CD4-positive, alpha-beta memory T cell (primary cell): ENCODE measurements at regions of chr1 and their contacts with region 1.

Region 1: DNA sequence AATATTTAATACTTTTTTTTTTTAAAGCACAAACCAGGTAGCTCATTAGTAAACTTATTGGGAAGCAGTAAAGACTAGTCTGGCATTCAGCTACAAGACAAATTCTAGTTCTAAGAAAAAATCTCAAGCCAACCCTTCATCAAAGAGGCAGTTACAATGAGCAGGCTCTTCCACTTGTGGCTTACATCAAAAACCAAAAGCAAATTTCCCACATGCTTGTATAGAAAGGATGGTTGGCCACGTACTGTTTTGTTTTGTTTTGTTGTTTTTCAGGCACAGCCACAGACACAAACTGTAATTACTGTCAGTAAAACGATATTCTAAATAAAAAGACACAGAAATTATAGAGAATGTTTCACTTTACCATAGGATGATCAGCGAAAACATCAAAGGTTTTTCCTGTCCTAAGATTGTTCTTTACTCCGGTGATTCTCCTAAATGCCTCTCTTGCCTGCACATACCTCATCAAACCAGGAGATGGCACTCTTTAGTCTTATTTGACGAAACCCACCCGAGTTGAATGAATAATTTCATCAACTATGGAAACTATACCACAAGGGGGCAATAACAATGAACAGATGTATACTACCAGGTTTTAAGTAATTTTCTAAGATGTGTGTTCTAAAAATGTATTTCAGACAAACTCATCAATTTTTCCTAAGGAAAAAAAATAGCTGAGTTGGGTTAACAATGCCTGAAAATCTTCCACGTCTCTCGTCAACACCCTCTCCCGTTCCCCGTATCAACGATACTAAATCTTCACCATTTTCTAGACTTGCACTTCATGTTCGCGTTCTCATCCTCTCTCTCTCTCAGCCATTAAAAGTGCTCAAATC is 26.9 kb downstream of the RPL5 start:
- DNase-seq: peak; percentile 70 to 84 (median 80)
- H3K4me3 ChIP-seq: no peak overlapping the region
- H3K4me3 Mint-ChIP-seq: peak overlapping the region; percentile 48 to 81 (median 71)
- H3K27ac ChIP-seq: peak overlapping the region; percentile 6
- H3K27ac Mint-ChIP-seq: peak overlapping the region; percentile 14 to 89 (median 68)
- H3K4me1 ChIP-seq: peaks cover 22% of the 10 kb centered on the region
- H3K4me1 Mint-ChIP-seq: peaks cover 14 to 17% (median 15%) of the 10 kb centered on the region in 4 donors
- H3K27me3 ChIP-seq: no peaks in the 10 kb centered on the region
- H3K27me3 Mint-ChIP-seq: no peaks in the 10 kb centered on the region

Region 2: GRCh38 chr1:92108631-92109030 is 750.2 kb before region 1 on chr1:
- CTCF ChIA-PET with region 1: no interaction called
- POLR2A ChIA-PET with region 1: no interaction called
- intact Hi-C with region 1: no loop called
- DNase-seq: no peak
- H3K4me3 ChIP-seq: no peak overlapping the region
- H3K4me3 Mint-ChIP-seq: no peak overlapping the region
- H3K27ac ChIP-seq: no peak overlapping the region
- H3K27ac Mint-ChIP-seq: no peak overlapping the region
- H3K4me1 ChIP-seq: no peaks in the 10 kb centered on the region
- H3K4me1 Mint-ChIP-seq: no peaks in the 10 kb centered on the region
- H3K27me3 ChIP-seq: no peaks in the 10 kb centered on the region
- H3K27me3 Mint-ChIP-seq: no peaks in the 10 kb centered on the region

Region 3: DNA sequence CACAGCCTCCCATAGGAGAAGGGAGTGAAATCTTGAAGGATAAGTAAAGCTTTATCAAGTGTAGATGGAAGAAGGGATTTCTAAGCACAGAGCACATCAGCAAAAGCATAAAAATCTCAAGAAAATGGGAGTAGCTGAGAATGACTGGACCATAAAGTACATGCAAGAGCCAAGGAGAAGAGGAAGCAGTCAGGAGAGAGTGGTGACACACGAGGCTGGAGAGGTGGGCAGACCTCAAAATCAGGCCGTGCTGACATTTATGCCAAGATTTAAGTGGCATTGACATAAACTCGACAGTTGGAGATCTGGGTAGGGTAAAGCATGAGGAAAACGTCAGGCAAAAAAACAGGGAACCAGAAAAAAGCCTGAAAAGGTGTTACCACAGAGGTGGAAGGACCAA is 434.4 kb before region 1 on chr1:
- CTCF ChIA-PET with region 1: no interaction called
- POLR2A ChIA-PET with region 1: no interaction called
- intact Hi-C with region 1: no loop called
- DNase-seq: no peak
- H3K4me3 ChIP-seq: no peak overlapping the region
- H3K4me3 Mint-ChIP-seq: no peak overlapping the region
- H3K27ac ChIP-seq: no peak overlapping the region
- H3K27ac Mint-ChIP-seq: no peak overlapping the region
- H3K4me1 ChIP-seq: no peaks in the 10 kb centered on the region
- H3K4me1 Mint-ChIP-seq: no peaks in the 10 kb centered on the region
- H3K27me3 ChIP-seq: no peaks in the 10 kb centered on the region
- H3K27me3 Mint-ChIP-seq: no peaks in the 10 kb centered on the region

Region 4: DNA sequence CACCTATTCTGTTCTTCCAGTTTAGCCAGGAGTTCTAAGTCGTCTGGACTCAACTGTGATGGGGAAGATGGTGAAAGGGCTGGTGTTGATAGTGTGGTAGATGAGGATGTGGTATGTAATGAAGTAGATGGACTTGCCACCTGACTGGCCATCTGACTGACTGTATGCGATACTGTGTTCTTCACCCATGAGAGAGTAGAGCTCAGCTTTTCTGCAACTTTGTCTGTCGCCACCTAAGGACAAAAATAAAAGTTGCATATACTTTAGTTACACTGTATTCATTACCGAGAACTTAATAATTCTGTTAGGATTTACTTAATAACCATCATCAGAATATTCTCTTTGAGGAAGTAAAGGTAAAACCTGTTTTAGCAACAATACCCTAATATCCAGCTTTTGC is 122.4 kb before region 1 on chr1:
- CTCF ChIA-PET with region 1: no interaction called
- POLR2A ChIA-PET with region 1: no interaction called
- intact Hi-C with region 1: no loop called
- DNase-seq: no peak
- H3K4me3 ChIP-seq: no peak overlapping the region
- H3K4me3 Mint-ChIP-seq: no peak overlapping the region
- H3K27ac ChIP-seq: no peak overlapping the region
- H3K27ac Mint-ChIP-seq: no peak overlapping the region
- H3K4me1 ChIP-seq: no peaks in the 10 kb centered on the region
- H3K4me1 Mint-ChIP-seq: no peaks in the 10 kb centered on the region
- H3K27me3 ChIP-seq: no peaks in the 10 kb centered on the region
- H3K27me3 Mint-ChIP-seq: peaks cover 7 to 9% of the 10 kb centered on the region in 2 donors

Region 5: DNA sequence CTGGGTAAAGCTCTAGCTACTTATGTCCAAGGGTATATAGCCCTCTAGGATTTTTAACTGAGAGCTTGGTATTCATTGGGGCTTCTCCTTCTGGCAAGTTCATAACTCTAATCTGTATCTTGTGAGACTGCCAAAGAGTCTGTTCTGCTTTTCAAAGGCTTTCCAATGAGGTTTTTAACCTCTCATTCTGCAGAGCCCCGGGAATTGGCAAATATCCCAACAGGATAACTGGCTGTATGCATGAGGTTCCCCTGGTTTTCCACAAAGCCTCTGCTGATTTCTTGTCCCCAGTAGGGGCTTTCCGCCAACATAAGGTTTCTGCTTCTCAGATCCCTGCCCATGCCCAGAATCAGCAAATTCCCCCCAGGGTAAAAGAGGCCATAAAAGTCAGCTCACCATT is 13.9 kb after region 1 on chr1:
- CTCF ChIA-PET with region 1: interaction called, 35 read pairs
- POLR2A ChIA-PET with region 1: interaction called, 3 read pairs
- intact Hi-C with region 1: no loop called
- DNase-seq: no peak
- H3K4me3 ChIP-seq: no peak overlapping the region
- H3K4me3 Mint-ChIP-seq: no peak overlapping the region
- H3K27ac ChIP-seq: no peak overlapping the region
- H3K27ac Mint-ChIP-seq: peak overlapping the region in 1 of 7 donors; percentile 41
- H3K4me1 ChIP-seq: peaks cover 16% of the 10 kb centered on the region
- H3K4me1 Mint-ChIP-seq: peaks cover 15 to 26% (median 21%) of the 10 kb centered on the region in 4 donors
- H3K27me3 ChIP-seq: no peaks in the 10 kb centered on the region
- H3K27me3 Mint-ChIP-seq: no peaks in the 10 kb centered on the region

Region 6: GRCh38 chr1:92944901-92945747 is 86.3 kb after region 1 on chr1:
- CTCF ChIA-PET with region 1: interaction called, 29 read pairs
- POLR2A ChIA-PET with region 1: no interaction called
- intact Hi-C with region 1: loop called (anchors 2 kb)
- DNase-seq: no peak
- H3K4me3 ChIP-seq: no peak overlapping the region
- H3K4me3 Mint-ChIP-seq: peak overlapping the region in 2 of 8 donors; percentile 4 to 17
- H3K27ac ChIP-seq: no peak overlapping the region
- H3K27ac Mint-ChIP-seq: peak overlapping the region in 2 of 7 donors; percentile 12 to 23
- H3K4me1 ChIP-seq: peaks cover 46% of the 10 kb centered on the region
- H3K4me1 Mint-ChIP-seq: peaks cover 39 to 56% (median 48%) of the 10 kb centered on the region in 4 donors
- H3K27me3 ChIP-seq: no peaks in the 10 kb centered on the region
- H3K27me3 Mint-ChIP-seq: no peaks in the 10 kb centered on the region

Region 7: GRCh38 chr1:92951141-92951582 is 92.4 kb after region 1 on chr1:
- CTCF ChIA-PET with region 1: interaction called, 263 read pairs
- POLR2A ChIA-PET with region 1: no interaction called
- intact Hi-C with region 1: loop called (anchors 2 kb)
- DNase-seq: peak in 4 of 5 donors; percentile 33 to 47 (median 39)
- H3K4me3 ChIP-seq: no peak overlapping the region
- H3K4me3 Mint-ChIP-seq: no peak overlapping the region
- H3K27ac ChIP-seq: peak overlapping the region; percentile 23
- H3K27ac Mint-ChIP-seq: no peak overlapping the region
- H3K4me1 ChIP-seq: peaks cover 59% of the 10 kb centered on the region
- H3K4me1 Mint-ChIP-seq: peaks cover 27 to 47% (median 31%) of the 10 kb centered on the region in 4 donors
- H3K27me3 ChIP-seq: no peaks in the 10 kb centered on the region
- H3K27me3 Mint-ChIP-seq: no peaks in the 10 kb centered on the region

Region 8: GRCh38 chr1:92968138-92969032 is 109.6 kb after region 1 on chr1:
- CTCF ChIA-PET with region 1: interaction called, 263 read pairs
- POLR2A ChIA-PET with region 1: interaction called, 79 read pairs
- intact Hi-C with region 1: loop called (anchors 2 kb)
- DNase-seq: peak in 4 of 5 donors; percentile 41 to 50 (median 46)
- H3K4me3 ChIP-seq: no peak overlapping the region
- H3K4me3 Mint-ChIP-seq: peak overlapping the region in 1 of 8 donors; percentile 57
- H3K27ac ChIP-seq: no peak overlapping the region
- H3K27ac Mint-ChIP-seq: peak overlapping the region; percentile 6 to 82 (median 49)
- H3K4me1 ChIP-seq: peaks cover 56% of the 10 kb centered on the region
- H3K4me1 Mint-ChIP-seq: peaks cover 16 to 32% (median 23%) of the 10 kb centered on the region in 4 donors
- H3K27me3 ChIP-seq: no peaks in the 10 kb centered on the region
- H3K27me3 Mint-ChIP-seq: no peaks in the 10 kb centered on the region

Region 9: GRCh38 chr1:93061895-93062792 is 203.4 kb after region 1 on chr1:
- CTCF ChIA-PET with region 1: interaction called, 11 read pairs
- POLR2A ChIA-PET with region 1: no interaction called
- intact Hi-C with region 1: loop called (anchors 1 kb)
- DNase-seq: peak; percentile 43 to 57 (median 49)
- H3K4me3 ChIP-seq: no peak overlapping the region
- H3K4me3 Mint-ChIP-seq: no peak overlapping the region
- H3K27ac ChIP-seq: no peak overlapping the region
- H3K27ac Mint-ChIP-seq: no peak overlapping the region
- H3K4me1 ChIP-seq: no peaks in the 10 kb centered on the region
- H3K4me1 Mint-ChIP-seq: peaks cover 0 to 5% (median 4%) of the 10 kb centered on the region in 4 donors
- H3K27me3 ChIP-seq: no peaks in the 10 kb centered on the region
- H3K27me3 Mint-ChIP-seq: peaks cover 12 to 20% of the 10 kb centered on the region in 2 donors